ENCODE measurements at regions of chr3 and their contacts with region 1.

Region 1: DNA sequence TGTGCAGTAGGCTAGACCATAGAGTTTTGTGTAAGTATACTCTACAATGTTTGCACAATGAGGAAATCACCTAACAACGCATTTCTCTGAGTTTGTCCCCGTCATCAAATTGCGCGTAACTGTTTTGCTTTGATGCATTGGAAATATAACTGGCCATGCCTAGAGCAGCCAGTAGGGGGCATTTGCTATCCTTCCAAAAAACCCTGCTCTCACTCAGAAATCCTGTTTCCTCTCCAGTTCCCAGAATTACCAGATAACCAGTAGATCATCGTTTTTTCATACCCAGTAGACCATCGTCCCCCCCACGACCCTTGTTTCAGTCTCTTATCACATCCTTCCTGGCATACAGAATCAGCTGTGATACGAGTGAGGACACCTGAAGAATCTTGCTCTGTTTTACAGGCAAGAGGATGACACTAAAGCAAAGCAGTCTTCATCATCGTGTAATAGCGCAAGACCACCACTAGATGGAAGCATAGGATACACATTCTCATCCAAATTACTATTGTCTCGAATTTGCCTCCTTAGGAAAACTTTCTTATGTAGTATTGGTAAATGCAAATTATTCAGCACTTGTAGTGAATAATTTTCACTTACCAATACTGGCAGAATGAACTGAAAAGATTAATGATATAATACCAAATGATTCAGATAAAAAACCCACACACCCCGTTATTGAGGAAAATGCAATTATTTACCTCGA is 4.4 kb upstream of the GABRR3 start:
- DNase-seq: peak; percentile 81
- H3K4me3 Mint-ChIP-seq: peak overlapping the region; percentile 77
- H3K27ac Mint-ChIP-seq: peak overlapping the region; percentile 91
- H3K4me1 Mint-ChIP-seq: peaks cover 13% of the 10 kb centered on the region
- H3K27me3 Mint-ChIP-seq: peaks cover 13% of the 10 kb centered on the region

Region 2: DNA sequence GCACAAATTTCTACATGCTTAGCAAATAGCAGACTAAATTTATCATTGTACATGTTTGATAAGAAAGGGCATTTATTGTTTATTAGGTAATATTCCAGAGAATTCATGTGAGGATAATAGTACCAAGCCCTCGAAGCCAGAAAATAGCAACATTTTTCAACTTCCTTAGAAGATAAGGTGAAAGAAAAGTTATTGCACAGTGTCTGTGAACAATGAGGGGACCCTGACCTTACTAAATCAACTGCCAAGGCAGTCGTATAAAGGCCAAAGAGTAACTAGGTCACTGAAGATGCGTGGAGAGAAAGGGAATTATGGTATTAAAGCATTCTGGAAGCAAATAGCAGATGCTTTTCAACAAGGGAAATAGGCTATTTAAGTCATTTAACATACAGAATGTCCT is 295.2 kb before region 1 on chr3:
- CTCF ChIA-PET with region 1: no interaction called
- POLR2A ChIA-PET with region 1: no interaction called
- intact Hi-C with region 1: no loop called
- DNase-seq: no peak
- H3K4me3 Mint-ChIP-seq: no peak overlapping the region
- H3K27ac Mint-ChIP-seq: no peak overlapping the region
- H3K4me1 Mint-ChIP-seq: no peaks in the 10 kb centered on the region
- H3K27me3 Mint-ChIP-seq: peaks cover 3% of the 10 kb centered on the region

Region 3: GRCh38 chr3:97764407-97765238 is 274.9 kb before region 1 on chr3 and contains the start of gene ARL6:
- CTCF ChIA-PET with region 1: interaction called, 5 read pairs
- POLR2A ChIA-PET with region 1: interaction called, 3 read pairs
- intact Hi-C with region 1: loop called (anchors 1 kb)
- DNase-seq: peak; percentile 81
- H3K4me3 Mint-ChIP-seq: peak within 1 kb of the TSS; percentile 98
- H3K27ac Mint-ChIP-seq: peak within 1 kb of the TSS; percentile 94
- H3K4me1 Mint-ChIP-seq: peaks cover 21% of the 10 kb centered on the region
- H3K27me3 Mint-ChIP-seq: no peaks in the 10 kb centered on the region
- total RNA-seq, gene ARL6: 3.9 to 6.1 TPM

Region 4: GRCh38 chr3:98022978-98023820 is 16.3 kb before region 1 on chr3:
- CTCF ChIA-PET with region 1: interaction called, 43 read pairs
- POLR2A ChIA-PET with region 1: no interaction called
- intact Hi-C with region 1: no loop called
- DNase-seq: peak; percentile 93
- H3K4me3 Mint-ChIP-seq: no peak overlapping the region
- H3K27ac Mint-ChIP-seq: no peak overlapping the region
- H3K4me1 Mint-ChIP-seq: peaks cover 5% of the 10 kb centered on the region
- H3K27me3 Mint-ChIP-seq: no peaks in the 10 kb centered on the region

Region 5: DNA sequence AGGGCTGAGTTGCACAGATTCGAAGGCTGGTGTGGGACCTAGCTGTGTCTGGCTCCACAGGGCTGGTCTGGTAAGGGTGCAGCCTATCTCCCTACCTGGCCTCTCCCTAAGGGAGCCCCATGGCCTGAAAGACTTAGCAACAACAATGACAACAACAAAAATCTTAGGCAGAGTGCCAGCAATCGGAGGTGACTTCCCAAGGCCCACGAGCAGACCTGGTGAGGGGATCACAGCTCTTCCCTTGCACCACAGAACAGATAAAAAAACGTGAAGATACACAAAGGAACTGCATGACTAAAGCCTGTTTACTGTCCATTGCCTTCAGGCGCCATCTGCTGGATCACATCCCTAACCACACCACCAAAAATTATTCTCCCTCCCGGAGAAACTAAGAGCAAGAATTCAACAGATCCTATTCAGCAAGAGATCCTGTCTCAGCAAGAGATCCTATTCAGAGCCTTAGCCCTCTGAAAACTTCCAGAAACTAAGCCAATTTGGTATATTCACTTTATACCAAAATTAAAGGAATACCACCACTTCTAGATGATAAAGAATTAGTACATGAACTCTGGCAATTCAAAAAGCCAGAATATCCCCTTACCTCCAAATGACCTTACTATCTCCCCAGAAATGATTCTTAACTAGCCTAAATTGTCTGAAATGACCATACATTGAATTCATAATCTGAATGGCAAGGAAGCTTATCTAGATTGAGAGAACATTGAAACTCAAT is 290.1 kb after region 1 on chr3:
- CTCF ChIA-PET with region 1: interaction called, 98 read pairs
- POLR2A ChIA-PET with region 1: no interaction called
- intact Hi-C with region 1: loop called (anchors 1 kb)
- DNase-seq: peak; percentile 53
- H3K4me3 Mint-ChIP-seq: no peak overlapping the region
- H3K27ac Mint-ChIP-seq: no peak overlapping the region
- H3K4me1 Mint-ChIP-seq: peaks cover 9% of the 10 kb centered on the region
- H3K27me3 Mint-ChIP-seq: peaks cover 3% of the 10 kb centered on the region

Region 6: DNA sequence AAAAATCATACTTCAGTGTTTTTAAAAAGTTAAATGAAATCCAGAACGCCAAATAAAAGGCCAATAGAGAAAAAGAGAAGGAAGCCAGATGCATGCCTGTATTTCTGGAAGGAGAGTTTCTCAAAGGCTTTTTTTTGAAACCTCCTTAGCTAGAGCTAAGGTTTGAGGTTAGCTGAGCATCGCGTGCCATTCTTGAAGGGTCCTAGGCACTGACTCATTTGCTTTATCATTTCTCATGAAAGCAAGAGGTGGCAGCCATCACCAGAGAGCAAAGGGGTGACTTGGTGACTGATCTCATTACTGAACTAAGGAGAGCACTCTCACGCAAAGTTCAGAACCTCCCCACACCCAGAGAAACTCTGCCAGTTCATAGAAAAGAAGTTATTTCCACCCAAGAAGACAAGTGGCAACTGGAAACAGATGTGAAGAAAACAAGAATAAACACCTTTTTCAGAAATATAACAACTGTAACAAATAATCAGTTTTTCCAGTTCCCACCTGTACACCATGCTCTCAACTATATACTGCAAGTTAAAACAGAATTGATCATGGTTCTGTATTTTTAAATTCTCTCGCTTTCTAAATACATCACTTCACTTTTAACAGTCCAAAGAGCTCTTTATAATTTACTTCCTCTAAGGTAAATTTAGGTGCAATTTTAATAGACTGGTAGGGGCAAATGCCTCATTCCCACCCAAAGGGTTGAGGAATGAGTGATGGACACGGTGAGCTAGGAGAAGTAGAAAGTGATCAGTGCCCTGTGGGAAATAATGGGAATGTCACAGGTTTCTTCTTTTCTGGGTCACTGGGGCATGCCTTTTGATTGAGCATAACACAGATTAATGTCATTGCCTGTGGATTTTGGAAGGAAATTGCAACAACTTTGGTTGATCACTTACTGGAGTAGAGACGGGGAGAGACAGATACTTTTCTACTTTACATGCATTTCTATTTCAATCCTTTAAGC is 517.0 kb after region 1 on chr3:
- CTCF ChIA-PET with region 1: no interaction called
- POLR2A ChIA-PET with region 1: no interaction called
- intact Hi-C with region 1: loop called (anchors 5 kb)
- DNase-seq: peak; percentile 88
- H3K4me3 Mint-ChIP-seq: peak overlapping the region; percentile 74
- H3K27ac Mint-ChIP-seq: peak overlapping the region; percentile 98
- H3K4me1 Mint-ChIP-seq: peaks cover 80% of the 10 kb centered on the region
- H3K27me3 Mint-ChIP-seq: peaks cover 3% of the 10 kb centered on the region

Region 7: GRCh38 chr3:98602078-98602678 is 562.7 kb after region 1 on chr3:
- CTCF ChIA-PET with region 1: interaction called, 18 read pairs
- POLR2A ChIA-PET with region 1: no interaction called
- intact Hi-C with region 1: loop called (anchors 1 kb)
- DNase-seq: no peak
- H3K4me3 Mint-ChIP-seq: no peak overlapping the region
- H3K27ac Mint-ChIP-seq: no peak overlapping the region
- H3K4me1 Mint-ChIP-seq: no peaks in the 10 kb centered on the region
- H3K27me3 Mint-ChIP-seq: peaks cover 9% of the 10 kb centered on the region

Measured in activated CD4-positive, alpha-beta memory T cell treated with anti-CD3 and anti-CD28 coated beads for 36 hours (primary cell).